ENCODE measurements at regions of chr5 and their contacts with region 1.

Region 1: GRCh38 chr5:9207817-9208418 is 338.0 kb downstream of the SEMA5A start:
- DNase-seq: no peak

Region 2: DNA sequence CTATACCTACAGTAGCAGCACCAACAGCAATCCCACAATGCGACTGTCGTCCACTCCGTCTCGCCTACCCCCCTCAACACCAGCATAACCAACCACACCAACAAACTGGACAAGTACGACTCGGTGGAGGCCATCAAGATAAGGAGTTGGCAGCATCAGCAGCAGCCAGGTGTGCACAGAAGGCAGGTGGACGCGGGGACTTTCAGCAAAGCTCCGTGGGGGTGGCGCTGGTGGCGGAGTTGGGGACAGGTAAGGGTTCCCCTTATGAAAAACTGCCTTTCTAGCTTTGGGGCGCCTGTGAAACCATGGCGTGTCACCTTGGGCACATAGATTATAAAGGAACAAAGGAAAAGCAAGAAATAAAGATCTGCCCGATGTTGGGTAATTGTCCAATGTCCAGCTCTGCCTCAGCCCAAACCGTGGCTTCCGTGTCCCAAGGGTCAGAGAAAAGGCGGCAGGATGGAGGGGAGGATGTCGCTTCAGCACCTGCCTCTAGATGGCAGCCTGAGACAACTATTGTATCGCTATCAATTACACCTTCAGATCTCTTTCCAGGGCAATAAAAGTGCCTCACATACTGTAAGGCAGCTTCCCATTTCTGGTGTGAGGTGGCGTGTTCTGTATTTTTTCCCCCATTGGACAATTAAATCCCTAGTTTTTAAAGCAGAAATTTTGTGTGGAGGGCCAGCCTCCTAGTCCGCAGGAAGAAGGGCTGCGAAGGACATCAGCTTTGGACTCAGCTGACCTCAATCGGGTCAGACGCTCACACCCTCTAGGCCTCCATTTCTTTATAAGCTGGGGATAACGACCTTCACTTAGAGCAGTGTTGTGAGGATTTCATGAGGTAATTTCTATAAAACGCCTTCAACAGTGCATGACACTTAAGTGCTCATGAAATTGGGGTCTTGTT is 1280.2 kb before region 1 on chr5:
- intact Hi-C with region 1: loop called (anchors 10 kb)
- DNase-seq: peak in 8 of 10 donors; percentile 31 to 85 (median 58)

Region 3: GRCh38 chr5:8329773-8330172 is 878.1 kb before region 1 on chr5:
- intact Hi-C with region 1: no loop called
- DNase-seq: no peak

Region 4: DNA sequence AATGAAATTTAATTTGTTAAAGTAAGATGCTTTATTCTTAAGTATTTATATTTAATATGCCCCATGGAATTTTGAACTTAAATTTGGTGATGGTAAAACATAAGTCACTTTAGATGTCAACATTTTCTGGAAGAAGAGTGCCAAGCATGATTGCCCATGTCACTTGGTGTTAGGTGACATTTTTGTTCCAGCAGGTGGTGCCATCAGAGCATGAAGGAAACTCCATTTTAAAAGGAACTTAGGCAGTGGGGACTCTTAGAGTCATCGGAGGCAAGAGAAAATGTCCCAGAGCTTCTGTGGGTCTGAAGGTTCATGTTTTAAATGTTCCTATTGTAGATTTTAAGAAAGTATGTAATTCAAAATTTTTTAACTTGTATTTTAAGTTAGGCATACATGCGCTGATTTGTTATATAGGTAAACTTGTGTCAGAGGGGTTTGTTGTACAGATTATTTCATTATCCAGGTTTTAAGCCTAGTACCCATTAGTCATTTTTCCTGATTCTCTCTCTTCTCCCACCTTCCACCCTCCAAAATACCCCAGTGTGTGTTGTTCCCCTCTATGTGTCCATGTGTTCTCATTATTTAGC is 451.3 kb before region 1 on chr5:
- intact Hi-C with region 1: loop called (anchors 5 kb)
- DNase-seq: peak in 5 of 10 donors; percentile 13 to 60 (median 41)

Region 5: GRCh38 chr5:8842971-8843551 is 364.9 kb before region 1 on chr5:
- intact Hi-C with region 1: loop called (anchors 10 kb)
- DNase-seq: peak in 8 of 10 donors; percentile 57 to 95 (median 69)

Region 6: DNA sequence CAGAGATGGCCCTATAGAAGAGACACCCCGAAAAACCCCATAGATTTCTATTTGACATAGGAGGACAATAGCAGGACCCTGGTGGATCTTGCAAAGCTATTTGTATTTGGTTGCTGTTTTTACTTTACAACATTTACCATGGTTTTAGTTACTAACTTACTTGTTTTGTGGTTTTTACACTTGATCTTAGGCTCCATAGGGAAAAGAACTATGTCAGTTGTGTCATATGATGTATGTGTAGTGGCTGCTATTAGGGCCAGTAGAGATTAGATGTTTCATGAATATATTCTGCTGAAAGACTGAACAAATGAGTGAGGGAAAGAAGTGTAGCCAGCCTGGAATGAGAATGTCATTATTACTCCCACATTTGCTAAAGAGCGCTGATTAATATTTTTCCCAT is 50.1 kb before region 1 on chr5:
- intact Hi-C with region 1: loop called (anchors 2 kb)
- DNase-seq: no peak